ENCODE measurements at regions of chr19 and their contacts with region 1.

Region 1: GRCh38 chr19:6737284-6738046 is at the start of gene GPR108:
- DNase-seq: peak; percentile 94 to 100 (median 99)
- ATAC-seq: peak; percentile 85
- H3K4me3 ChIP-seq: peak within 1 kb of the TSS; percentile 87
- H3K4me3 Mint-ChIP-seq: peak within 1 kb of the TSS; percentile 89 to 98 (median 96)
- H3K27ac ChIP-seq: peak within 1 kb of the TSS; percentile 86
- H3K27ac Mint-ChIP-seq: peak within 1 kb of the TSS; percentile 90 to 99 (median 96)
- H3K4me1 ChIP-seq: peaks cover 31 to 32% of the 10 kb centered on the region in 2 donors
- H3K4me1 Mint-ChIP-seq: peaks cover 24 to 41% (median 37%) of the 10 kb centered on the region in 7 donors
- H3K27me3 ChIP-seq: no peaks in the 10 kb centered on the region
- H3K27me3 Mint-ChIP-seq: peaks cover 0 to 3% (median 0%) of the 10 kb centered on the region in 5 donors
- total RNA-seq, gene GPR108: 36.1 to 81.6 (median 61.9) TPM

Region 2: DNA sequence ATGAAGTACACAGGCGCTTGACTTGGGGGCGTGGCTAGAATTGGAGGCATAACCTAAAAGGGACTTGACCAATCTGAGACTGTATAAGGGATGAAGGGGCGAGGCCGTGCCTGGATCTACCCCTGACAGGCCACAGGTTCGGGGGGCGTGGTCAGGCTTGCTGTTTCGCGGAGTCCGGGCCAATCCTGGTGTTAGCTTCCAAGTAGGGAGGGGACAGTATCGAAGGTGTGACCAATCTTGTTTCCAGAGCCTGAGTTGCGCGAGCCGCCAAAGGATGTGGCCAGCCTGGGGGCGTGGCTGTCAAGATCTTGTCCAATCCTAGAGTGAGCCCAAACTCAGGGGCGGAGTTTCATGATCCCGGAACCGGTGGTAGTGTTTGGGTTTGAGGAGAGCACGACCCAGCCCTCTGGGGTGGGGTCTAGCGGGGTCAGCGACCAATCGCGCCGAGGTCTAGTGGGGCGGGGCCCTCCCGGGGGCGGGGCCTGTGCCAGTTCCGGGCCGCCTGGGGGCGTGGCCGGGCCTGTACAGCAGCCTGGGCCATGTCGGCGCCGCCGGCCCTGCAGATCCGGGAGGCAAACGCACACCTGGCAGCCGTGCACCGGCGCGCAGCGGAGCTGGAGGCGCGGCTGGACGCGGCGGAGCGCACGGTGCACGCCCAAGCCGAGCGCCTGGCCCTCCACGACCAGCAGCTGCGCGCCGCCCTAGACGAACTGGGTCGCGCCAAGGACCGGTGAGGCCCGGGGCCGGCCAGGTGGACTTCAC is 832.9 kb before region 1 on chr19 and contains the start of gene VMAC:
- CTCF ChIA-PET with region 1: no interaction called
- POLR2A ChIA-PET with region 1: no interaction called
- intact Hi-C with region 1: loop called (anchors 1 to 2 kb)
- DNase-seq: peak in 8 of 9 donors; percentile 99 to 100 (median 100)
- ATAC-seq: peak; percentile 85
- H3K4me3 ChIP-seq: peak within 1 kb of the TSS; percentile 89
- H3K4me3 Mint-ChIP-seq: peak within 1 kb of the TSS; percentile 89 to 99 (median 96)
- H3K27ac ChIP-seq: peak within 1 kb of the TSS; percentile 93
- H3K27ac Mint-ChIP-seq: peak within 1 kb of the TSS; percentile 96 to 100 (median 100)
- H3K4me1 ChIP-seq: peaks cover 18 to 19% of the 10 kb centered on the region in 2 donors
- H3K4me1 Mint-ChIP-seq: peaks cover 21 to 53% (median 30%) of the 10 kb centered on the region in 7 donors
- H3K27me3 ChIP-seq: no peaks in the 10 kb centered on the region
- H3K27me3 Mint-ChIP-seq: no peaks in the 10 kb centered on the region
- total RNA-seq, gene VMAC: 13.1 to 39.4 (median 27.8) TPM

Region 3: GRCh38 chr19:6393074-6393983 is 344.1 kb before region 1 on chr19 and contains the start of gene GTF2F1:
- CTCF ChIA-PET with region 1: no interaction called
- POLR2A ChIA-PET with region 1: no interaction called
- intact Hi-C with region 1: loop called in 1 of 2 experiments (anchors 1 kb)
- DNase-seq: peak; percentile 87 to 96 (median 92)
- ATAC-seq: peak; percentile 88
- H3K4me3 ChIP-seq: peak within 1 kb of the TSS; percentile 81
- H3K4me3 Mint-ChIP-seq: peak within 1 kb of the TSS; percentile 90 to 95 (median 94)
- H3K27ac ChIP-seq: peak within 1 kb of the TSS; percentile 98
- H3K27ac Mint-ChIP-seq: peak within 1 kb of the TSS; percentile 95 to 99 (median 97)
- H3K4me1 ChIP-seq: peaks cover 8 to 12% of the 10 kb centered on the region in 2 donors
- H3K4me1 Mint-ChIP-seq: peaks cover 20 to 27% (median 25%) of the 10 kb centered on the region in 7 donors
- H3K27me3 ChIP-seq: no peaks in the 10 kb centered on the region
- H3K27me3 Mint-ChIP-seq: no peaks in the 10 kb centered on the region
- total RNA-seq, gene GTF2F1: 51.5 to 71.6 (median 61.3) TPM

Region 4: DNA sequence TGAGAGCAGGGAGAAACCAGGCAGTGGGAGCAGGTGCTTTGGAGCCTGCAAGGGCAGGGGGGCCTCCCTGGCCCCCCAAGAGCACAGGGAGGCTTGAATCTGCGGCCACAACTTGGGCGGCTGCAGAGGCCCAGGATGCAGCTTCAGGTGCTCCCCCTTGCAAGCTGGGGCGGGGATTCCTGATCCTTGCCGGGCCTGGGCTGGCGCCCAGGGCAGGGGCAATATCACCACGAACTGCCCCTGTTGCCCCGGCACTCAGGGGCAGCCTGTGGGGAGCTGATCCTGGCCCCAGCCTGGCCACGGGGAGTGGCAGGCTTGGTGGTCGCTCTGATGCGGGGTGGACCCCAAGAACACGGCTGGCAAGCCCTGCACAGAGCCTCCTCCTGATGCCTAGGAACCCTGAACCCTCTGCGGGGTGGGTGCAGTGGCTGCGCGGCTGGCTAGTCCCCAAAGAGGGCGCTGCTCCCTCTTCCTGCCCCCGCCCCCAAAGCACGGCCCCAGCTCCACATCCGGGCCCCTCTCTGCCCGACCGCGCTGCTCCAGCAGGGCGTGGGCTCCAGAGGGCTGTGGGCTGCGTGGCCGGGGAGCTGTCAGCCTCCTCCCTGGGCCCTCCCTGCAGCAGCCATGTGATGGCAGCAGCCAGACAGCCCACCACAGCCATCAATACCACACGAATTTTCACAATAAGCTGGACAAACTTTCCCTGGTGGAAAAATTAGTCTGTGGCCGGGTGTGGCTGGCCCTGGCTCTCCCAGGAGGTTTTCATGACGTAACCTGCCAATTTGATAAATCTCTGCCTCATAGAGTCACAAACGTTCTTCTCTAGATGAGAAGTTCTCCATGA is 185.6 kb before region 1 on chr19:
- CTCF ChIA-PET with region 1: no interaction called
- POLR2A ChIA-PET with region 1: no interaction called
- intact Hi-C with region 1: loop called in 1 of 2 experiments (anchors 1 kb)
- DNase-seq: peak; percentile 31 to 62 (median 56)
- ATAC-seq: peak; percentile 97
- H3K4me3 ChIP-seq: no peak overlapping the region
- H3K4me3 Mint-ChIP-seq: peak overlapping the region in 6 of 10 donors; percentile 4 to 47 (median 38)
- H3K27ac ChIP-seq: peak overlapping the region; percentile 21
- H3K27ac Mint-ChIP-seq: no peak overlapping the region
- H3K4me1 ChIP-seq: peaks cover 11 to 14% of the 10 kb centered on the region in 2 donors
- H3K4me1 Mint-ChIP-seq: peaks cover 0 to 16% (median 9%) of the 10 kb centered on the region in 7 donors
- H3K27me3 ChIP-seq: no peaks in the 10 kb centered on the region
- H3K27me3 Mint-ChIP-seq: peaks cover 0 to 3% (median 0%) of the 10 kb centered on the region in 5 donors

Region 5: DNA sequence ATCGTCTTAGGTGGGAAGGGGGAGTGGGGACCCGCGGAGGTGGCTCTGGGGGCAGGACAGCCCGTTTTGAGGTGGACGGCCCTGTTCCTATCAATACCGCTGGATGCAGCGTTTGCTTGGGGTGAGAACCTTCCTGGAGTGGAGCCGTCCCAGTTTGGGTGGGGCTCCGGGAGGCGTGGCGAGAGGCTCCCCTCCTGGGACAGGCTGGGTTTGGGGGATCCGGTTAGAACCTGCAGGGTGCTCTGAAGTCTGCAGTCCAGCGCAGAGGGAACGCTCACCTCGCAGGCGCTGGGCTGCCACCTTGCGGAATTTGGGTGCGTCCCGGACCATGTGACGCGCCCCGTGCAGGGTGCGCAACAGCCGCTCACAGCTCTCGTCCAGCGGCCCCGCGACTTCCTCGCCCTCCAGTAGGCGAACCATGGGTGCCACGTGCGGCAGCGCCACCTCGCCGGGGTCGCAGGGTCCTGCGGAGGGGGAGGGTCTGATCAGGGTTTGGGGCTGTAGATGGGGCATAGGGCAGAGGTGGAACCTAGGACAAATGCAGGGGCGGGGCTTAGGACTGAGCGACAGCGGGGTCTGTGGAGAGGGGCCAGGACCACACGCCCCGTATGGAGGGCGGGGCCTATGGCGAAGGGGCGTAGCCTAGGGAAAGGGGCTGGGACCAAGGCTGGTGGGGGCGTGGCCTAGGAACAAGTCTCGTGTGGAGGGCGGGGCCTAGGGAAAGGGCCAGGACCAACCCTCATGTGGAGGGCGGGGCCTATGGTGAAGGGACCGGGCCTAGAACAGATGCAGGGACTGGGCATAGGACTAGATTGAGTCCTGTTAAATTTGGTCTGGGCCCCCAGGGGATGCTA is 15.9 kb after region 1 on chr19:
- CTCF ChIA-PET with region 1: interaction called, 7 read pairs
- POLR2A ChIA-PET with region 1: no interaction called
- intact Hi-C with region 1: loop called (anchors 1 kb)
- DNase-seq: peak; percentile 64 to 86 (median 75)
- ATAC-seq: peak; percentile 96
- H3K4me3 ChIP-seq: peak overlapping the region; percentile 64
- H3K4me3 Mint-ChIP-seq: peak overlapping the region; percentile 64 to 89 (median 74)
- H3K27ac ChIP-seq: peak overlapping the region; percentile 48
- H3K27ac Mint-ChIP-seq: peak overlapping the region; percentile 41 to 93 (median 88)
- H3K4me1 ChIP-seq: no peaks in the 10 kb centered on the region
- H3K4me1 Mint-ChIP-seq: peaks cover 5 to 14% (median 11%) of the 10 kb centered on the region in 7 donors
- H3K27me3 ChIP-seq: no peaks in the 10 kb centered on the region
- H3K27me3 Mint-ChIP-seq: no peaks in the 10 kb centered on the region

Region 6: GRCh38 chr19:6891761-6892385 is 154.4 kb after region 1 on chr19:
- CTCF ChIA-PET with region 1: no interaction called
- POLR2A ChIA-PET with region 1: interaction called, 4 read pairs
- intact Hi-C with region 1: loop called in 1 of 2 experiments (anchors 1 kb)
- DNase-seq: peak in 7 of 9 donors; percentile 28 to 75 (median 64)
- ATAC-seq: peak; percentile 74
- H3K4me3 ChIP-seq: peak overlapping the region; percentile 7
- H3K4me3 Mint-ChIP-seq: peak overlapping the region; percentile 54 to 89 (median 72)
- H3K27ac ChIP-seq: peak overlapping the region; percentile 65
- H3K27ac Mint-ChIP-seq: peak overlapping the region; percentile 85 to 97 (median 94)
- H3K4me1 ChIP-seq: peaks cover 31 to 77% of the 10 kb centered on the region in 2 donors
- H3K4me1 Mint-ChIP-seq: peaks cover 61 to 100% (median 93%) of the 10 kb centered on the region in 7 donors
- H3K27me3 ChIP-seq: no peaks in the 10 kb centered on the region
- H3K27me3 Mint-ChIP-seq: no peaks in the 10 kb centered on the region

Region 7: DNA sequence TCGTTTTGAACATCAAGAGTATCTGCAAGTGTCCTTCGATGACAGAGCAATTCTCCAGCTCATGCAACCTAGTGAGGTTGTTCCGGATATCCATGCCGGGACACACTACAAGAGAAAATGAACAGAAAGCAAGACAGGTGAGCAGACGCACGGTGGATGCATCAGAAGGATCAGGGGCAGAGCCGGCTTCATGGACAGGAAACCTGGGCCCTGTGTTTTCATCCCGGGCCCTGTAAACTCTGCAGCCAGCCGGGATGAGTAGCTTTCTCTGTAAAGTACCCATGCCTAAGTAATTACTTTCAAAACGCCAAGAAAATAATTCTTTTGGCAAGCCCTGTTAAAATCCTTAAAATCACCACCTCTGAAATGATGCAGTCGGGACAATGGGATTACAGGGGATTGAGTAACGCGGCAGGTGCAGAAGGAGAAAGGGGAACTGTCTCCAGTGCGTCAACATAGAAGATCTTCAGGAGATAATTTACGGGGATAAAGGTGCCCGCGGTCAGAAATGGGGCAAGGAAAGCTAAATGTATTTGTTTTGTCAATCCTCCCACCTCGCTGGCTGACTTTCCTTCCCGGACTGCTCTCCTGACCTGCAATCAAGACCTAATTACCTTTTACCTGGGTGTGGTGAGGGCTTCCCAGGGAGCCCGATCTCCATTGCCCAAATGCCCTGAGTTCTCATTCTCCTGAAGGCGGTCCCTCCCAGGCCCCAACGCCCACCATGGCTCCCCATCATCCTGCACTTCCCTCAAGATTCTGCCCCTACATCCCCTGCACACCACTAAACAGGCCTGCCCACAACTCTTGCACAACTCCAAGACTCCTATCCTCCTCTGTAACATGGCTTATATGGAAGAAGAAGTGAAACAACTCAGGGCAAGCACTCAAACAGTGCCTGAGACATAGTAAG is 530.6 kb after region 1 on chr19:
- CTCF ChIA-PET with region 1: no interaction called
- POLR2A ChIA-PET with region 1: no interaction called
- intact Hi-C with region 1: no loop called
- DNase-seq: no peak
- ATAC-seq: peak; percentile 67
- H3K4me3 ChIP-seq: no peak overlapping the region
- H3K4me3 Mint-ChIP-seq: no peak overlapping the region
- H3K27ac ChIP-seq: no peak overlapping the region
- H3K27ac Mint-ChIP-seq: peak overlapping the region in 1 of 9 donors; percentile 18
- H3K4me1 ChIP-seq: no peaks in the 10 kb centered on the region
- H3K4me1 Mint-ChIP-seq: peaks cover 0 to 7% (median 0%) of the 10 kb centered on the region in 7 donors
- H3K27me3 ChIP-seq: no peaks in the 10 kb centered on the region
- H3K27me3 Mint-ChIP-seq: no peaks in the 10 kb centered on the region

Region 8: DNA sequence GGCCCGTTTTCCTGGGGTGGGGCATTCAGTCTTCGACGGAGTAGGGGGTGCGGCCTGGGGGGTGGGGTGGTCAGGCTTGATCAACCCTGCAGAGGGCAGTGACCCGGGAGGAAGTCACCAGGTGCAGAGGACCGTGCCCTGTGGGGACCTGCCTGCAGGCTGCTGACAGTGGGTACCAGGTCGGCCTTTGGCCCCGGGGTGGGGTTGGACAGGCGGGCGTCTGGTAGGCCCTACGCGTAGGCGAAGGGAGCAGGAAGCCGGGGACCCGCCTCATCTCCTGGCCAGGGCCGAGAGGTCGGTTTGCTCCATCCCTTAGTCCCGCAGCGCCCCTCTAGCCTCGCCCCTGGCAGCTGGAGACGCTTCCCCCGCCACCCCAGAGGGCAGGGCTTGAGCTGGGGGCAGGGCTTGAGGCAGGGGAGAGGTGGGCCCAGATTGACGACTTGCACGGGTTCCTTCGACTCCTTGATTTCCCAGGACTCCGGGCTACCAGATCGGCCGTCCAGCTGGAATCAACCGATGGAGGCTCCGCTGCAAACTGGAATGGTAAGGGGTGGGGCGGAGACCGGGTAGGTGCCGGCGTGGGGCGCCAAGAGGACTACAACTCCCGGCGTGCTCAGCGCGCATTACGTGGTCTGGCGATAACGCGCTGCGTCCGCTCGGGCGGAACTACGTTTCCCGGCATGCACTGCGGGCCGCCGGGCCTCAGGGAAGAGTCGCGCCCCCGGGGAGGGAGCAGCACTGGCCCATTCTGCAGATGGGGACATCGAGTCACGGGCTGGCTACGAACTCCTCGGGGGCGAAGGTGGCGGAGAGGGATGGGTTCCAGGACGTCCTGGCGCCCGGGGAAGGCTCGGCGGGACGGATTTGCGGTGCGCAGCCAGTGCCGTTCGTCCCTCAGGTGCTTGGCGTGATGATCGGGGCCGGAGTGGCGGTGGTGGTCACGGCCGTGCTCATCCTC is 797.8 kb after region 1 on chr19 and contains the start of gene PNPLA6:
- CTCF ChIA-PET with region 1: no interaction called
- POLR2A ChIA-PET with region 1: no interaction called
- intact Hi-C with region 1: loop called in 1 of 2 experiments (anchors 2 kb)
- DNase-seq: peak; percentile 85 to 95 (median 91)
- ATAC-seq: peak; percentile 91
- H3K4me3 ChIP-seq: peak within 1 kb of the TSS; percentile 99
- H3K4me3 Mint-ChIP-seq: peak within 1 kb of the TSS; percentile 93 to 97 (median 94)
- H3K27ac ChIP-seq: peak within 1 kb of the TSS; percentile 81
- H3K27ac Mint-ChIP-seq: peak within 1 kb of the TSS; percentile 81 to 96 (median 92)
- H3K4me1 ChIP-seq: peaks cover 10 to 17% of the 10 kb centered on the region in 2 donors
- H3K4me1 Mint-ChIP-seq: peaks cover 6 to 26% (median 22%) of the 10 kb centered on the region in 7 donors
- H3K27me3 ChIP-seq: no peaks in the 10 kb centered on the region
- H3K27me3 Mint-ChIP-seq: no peaks in the 10 kb centered on the region
- total RNA-seq, gene PNPLA6: 82.0 to 157 (median 133) TPM

Measured in naive thymus-derived CD4-positive, alpha-beta T cell (primary cell).